GM10248 (cell line): ENCODE measurements at regions of chr9 and their contacts with region 1.

Region 1: GRCh38 chr9:38707885-38708637 is 11.9 kb downstream of the FAM240B start:
- DNase-seq: peak; percentile 32
- CTCF ChIP-seq: peak; percentile 28

Region 2: GRCh38 chr9:38620483-38621433 is 87.3 kb before region 1 on chr9 and contains the start of gene ANKRD18A:
- CTCF ChIA-PET with region 1: interaction called, 21 read pairs
- POLR2A ChIA-PET with region 1: no interaction called
- DNase-seq: peak; percentile 65
- CTCF ChIP-seq: peak; percentile 69

Region 3: DNA sequence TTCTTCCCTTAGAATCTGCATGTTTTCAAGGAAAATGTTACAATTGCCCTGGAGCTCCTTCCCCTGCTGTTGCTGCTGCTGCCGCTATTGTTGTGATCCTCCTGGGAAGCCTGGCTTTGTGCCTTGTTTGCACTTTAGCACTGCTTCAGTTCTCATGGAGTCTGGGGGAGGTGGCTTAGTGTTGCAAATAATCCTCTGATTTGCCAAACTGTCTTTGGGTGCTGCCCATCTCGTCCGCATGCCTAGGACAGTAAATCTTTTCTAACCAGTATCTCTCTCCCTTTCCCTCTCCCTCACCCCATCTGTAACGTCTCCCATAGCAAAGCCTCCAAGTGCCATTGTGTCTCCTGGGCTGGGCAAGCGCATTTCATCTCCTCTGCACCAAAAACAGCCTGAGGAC is 18.4 kb before region 1 on chr9:
- CTCF ChIA-PET with region 1: interaction called, 48 read pairs
- POLR2A ChIA-PET with region 1: no interaction called
- DNase-seq: no peak
- CTCF ChIP-seq: no peak

Region 4: GRCh38 chr9:38768351-38768761 is 60.3 kb after region 1 on chr9:
- CTCF ChIA-PET with region 1: no interaction called
- POLR2A ChIA-PET with region 1: no interaction called
- DNase-seq: no peak
- CTCF ChIP-seq: no peak